Endothelial cell of umbilical vein (primary cell): ENCODE measurements at regions of chr10 and their contacts with region 1.

Region 1: DNA sequence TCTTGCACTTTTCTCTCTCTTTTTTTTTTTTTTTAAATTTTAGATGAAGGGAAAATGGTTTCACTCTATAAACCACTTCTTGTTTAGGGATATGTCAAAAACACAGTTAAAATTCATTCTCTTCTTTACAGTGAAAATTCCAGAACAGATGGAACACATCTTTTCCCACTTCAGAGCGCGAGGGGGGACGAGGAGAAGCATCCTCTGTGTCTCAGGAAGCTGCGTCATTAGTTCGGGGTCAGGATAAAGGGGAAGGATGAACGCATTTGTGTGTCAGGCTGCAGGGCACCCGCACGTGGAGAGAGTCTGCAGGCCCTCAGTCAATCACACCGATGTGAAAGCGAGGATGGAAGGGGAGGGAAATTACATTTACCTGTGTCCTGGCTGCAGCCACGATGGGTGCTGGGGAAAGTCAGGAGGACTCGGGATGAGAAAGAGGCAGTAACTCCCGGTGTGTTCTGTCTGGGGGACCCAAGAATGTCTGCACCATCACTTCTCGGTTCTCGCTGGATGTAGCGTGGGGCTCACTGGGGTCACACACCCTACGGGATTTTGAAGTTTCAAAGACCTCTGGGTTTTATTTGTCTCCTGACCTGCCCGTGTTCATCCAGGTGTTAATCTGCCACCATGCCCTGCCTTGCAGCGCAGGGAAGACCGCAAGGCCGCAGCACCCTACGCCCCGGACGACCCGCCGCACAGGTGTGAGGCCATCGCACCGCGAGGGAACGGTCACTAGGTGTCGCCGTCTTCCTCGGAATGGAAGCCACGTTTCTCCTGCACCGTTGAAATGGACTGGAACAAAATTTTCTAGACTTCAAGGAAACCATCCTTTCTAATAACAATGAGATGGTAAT is 66.7 kb upstream of the PITRM1 start:
- DNase-seq: peak; percentile 78
- H3K4me3 ChIP-seq: no peak overlapping the region
- H3K27ac ChIP-seq: peak overlapping the region; percentile 80
- H3K4me1 ChIP-seq: peaks cover 11% of the 10 kb centered on the region
- H3K27me3 ChIP-seq: no peaks in the 10 kb centered on the region
- CTCF ChIP-seq: peak; percentile 86 to 87
- POLR2A ChIP-seq: no peak

Region 2: DNA sequence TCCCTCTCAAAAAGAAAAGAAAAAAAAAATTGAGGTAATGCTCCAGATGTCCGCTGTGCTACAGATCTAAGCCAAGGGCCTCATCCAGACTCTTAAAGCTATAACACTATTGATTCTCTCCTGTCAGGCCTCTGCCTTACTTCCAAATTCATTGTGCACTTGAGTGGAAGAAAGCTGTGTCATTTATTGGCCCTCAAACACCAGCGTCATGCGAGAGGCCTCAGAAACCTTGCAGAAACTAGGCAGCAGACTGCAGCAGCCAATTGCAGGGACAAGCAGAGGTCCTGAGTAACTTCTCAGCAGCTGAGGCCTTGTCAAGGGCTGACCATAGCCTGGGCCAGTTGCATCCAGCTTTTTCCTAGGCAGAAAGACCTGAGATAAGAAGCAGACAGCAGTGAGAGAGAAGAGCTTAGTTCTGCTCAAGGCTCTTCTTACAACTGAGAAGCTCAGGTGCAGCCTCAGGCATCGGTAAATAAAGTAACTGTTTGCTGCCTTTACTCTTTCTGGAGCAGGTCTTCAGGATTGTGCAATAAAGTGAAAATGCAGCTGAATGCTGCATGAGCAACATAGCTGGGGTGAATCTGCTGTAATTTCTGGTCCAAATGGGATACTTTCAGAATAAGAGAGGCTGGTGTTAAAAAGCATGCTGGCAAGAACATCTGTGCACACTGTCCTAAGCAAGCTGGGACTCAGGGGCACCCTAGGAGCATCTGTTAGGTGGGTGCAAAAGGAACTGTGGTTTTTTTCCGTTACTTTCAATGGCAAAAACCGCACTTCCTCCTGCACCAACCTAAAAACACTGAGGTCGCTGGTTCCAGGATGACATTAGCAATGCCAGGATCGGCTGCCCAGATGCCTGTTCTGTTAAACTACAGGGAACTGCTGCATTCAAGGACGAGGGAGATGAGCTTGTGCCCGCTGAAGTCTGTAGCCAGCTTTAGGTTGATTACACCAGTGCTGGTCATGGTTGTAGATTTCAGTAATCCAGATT is 353.7 kb before region 1 on chr10:
- CTCF ChIA-PET with region 1: no interaction called
- POLR2A ChIA-PET with region 1: no interaction called
- dilution Hi-C with region 1: no loop called
- intact Hi-C with region 1: no loop called
- DNase-seq: no peak
- H3K4me3 ChIP-seq: no peak overlapping the region
- H3K27ac ChIP-seq: no peak overlapping the region
- H3K4me1 ChIP-seq: no peaks in the 10 kb centered on the region
- H3K27me3 ChIP-seq: peaks cover 0 to 5% of the 10 kb centered on the region in 2 experiments
- CTCF ChIP-seq: no peak
- POLR2A ChIP-seq: no peak

Region 3: GRCh38 chr10:3265088-3265487 is 25.8 kb after region 1 on chr10:
- CTCF ChIA-PET with region 1: interaction called, 3 read pairs
- POLR2A ChIA-PET with region 1: no interaction called
- dilution Hi-C with region 1: no loop called
- intact Hi-C with region 1: loop called (anchors 1 kb)
- DNase-seq: peak; percentile 26
- H3K4me3 ChIP-seq: no peak overlapping the region
- H3K27ac ChIP-seq: peak overlapping the region; percentile 82
- H3K4me1 ChIP-seq: peaks cover 39% of the 10 kb centered on the region
- H3K27me3 ChIP-seq: no peaks in the 10 kb centered on the region
- CTCF ChIP-seq: no peak
- POLR2A ChIP-seq: no peak

Region 4: DNA sequence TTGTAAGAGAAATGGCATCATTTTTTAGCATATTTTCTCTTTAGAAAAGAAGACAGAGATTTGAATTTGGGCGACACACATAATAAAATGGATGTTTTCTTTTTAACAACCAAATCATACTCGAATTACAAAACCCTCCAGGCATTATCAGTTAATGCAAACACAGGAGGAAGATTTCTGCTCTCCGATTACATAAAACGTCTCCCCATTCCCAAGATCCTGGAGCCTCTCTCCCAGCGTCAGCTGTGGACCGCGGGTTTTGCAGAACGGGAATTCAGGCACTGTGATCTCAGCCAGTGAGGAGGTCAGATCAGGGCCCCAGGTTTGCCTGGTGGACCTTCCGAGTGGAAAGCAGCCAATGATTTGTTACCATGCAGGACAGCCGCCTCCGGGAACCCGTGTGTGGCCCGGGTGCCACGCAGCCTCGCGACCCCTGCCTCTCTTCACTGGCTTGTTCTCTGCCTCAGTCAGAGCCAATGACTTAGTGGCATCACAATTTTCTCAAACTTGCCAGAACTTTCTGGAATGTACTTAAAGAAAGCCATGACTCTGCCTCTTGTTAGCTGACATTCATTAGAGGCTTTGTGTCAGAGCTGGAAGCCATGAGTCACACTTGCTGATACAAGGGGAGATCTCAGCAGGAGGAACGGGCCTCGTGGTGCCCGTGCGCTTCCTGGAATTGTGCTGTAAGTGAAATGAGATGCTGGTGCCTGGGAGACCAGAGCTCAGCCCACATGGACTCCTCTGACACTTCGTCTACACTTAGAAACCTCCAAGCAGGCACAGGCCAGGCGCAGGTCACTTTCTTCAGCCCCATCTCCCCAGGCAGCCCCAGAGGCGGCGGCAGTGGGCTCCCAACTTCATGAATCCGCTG is 299.6 kb after region 1 on chr10:
- CTCF ChIA-PET with region 1: no interaction called
- POLR2A ChIA-PET with region 1: no interaction called
- dilution Hi-C with region 1: no loop called
- intact Hi-C with region 1: loop called (anchors 5 kb)
- DNase-seq: peak; percentile 97
- H3K4me3 ChIP-seq: no peak overlapping the region
- H3K27ac ChIP-seq: peak overlapping the region; percentile 87
- H3K4me1 ChIP-seq: peaks cover 25% of the 10 kb centered on the region
- H3K27me3 ChIP-seq: no peaks in the 10 kb centered on the region
- CTCF ChIP-seq: no peak
- POLR2A ChIP-seq: no peak

Region 5: DNA sequence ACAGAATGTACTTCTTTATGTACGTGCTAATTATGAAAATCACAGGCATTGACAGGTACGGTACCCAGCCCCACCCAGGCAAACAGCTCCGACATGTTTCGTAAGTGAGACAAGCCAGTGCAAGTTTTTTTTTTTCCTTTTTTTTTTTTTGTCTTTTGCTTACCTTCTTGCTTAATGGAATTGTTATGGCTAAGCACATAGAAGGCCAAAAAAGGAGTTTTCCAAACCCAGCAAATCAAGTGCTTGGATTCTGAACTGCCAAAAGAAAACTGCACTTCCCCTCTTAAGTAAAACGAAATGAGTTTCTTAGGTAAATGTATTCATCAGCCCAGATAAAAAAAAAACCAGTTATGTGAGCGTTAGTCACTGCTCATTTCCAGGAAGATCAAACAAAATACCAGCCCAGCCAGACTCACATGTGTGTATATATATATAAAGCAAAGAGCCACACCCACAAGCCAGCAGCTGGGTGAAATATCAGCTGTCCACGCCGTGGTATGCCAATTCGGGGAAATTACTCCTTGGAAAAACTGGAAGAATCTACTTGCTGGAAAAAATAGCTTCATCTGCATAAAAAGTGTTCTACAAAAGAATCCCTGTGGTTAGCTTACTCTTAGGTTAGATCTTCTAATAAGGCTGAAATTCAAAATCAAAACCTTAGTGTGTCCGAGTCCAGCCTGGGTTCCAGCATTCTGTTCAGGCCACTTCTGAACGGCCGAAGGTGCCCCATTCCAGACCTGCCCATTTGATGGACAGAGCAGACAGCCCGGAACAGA is 537.7 kb after region 1 on chr10:
- CTCF ChIA-PET with region 1: interaction called, 24 read pairs
- POLR2A ChIA-PET with region 1: interaction called, 7 read pairs
- dilution Hi-C with region 1: no loop called
- intact Hi-C with region 1: loop called (anchors 1 kb)
- DNase-seq: peak; percentile 78
- H3K4me3 ChIP-seq: no peak overlapping the region
- H3K27ac ChIP-seq: peak overlapping the region; percentile 36
- H3K4me1 ChIP-seq: peaks cover 55% of the 10 kb centered on the region
- H3K27me3 ChIP-seq: no peaks in the 10 kb centered on the region
- CTCF ChIP-seq: no peak
- POLR2A ChIP-seq: peak; percentile 37